ENCODE measurements at regions of chr15 and their contacts with region 1.

Region 1: GRCh38 chr15:41557673-41558399 is 1.2 kb upstream of the TYRO3 start:
- DNase-seq: peak; percentile 85
- ATAC-seq: peak; percentile 75
- H3K4me3 Mint-ChIP-seq: peak overlapping the region; percentile 69
- H3K27ac Mint-ChIP-seq: peak overlapping the region; percentile 45
- H3K4me1 Mint-ChIP-seq: peaks cover 20% of the 10 kb centered on the region
- H3K27me3 Mint-ChIP-seq: peaks cover 10% of the 10 kb centered on the region

Region 2: DNA sequence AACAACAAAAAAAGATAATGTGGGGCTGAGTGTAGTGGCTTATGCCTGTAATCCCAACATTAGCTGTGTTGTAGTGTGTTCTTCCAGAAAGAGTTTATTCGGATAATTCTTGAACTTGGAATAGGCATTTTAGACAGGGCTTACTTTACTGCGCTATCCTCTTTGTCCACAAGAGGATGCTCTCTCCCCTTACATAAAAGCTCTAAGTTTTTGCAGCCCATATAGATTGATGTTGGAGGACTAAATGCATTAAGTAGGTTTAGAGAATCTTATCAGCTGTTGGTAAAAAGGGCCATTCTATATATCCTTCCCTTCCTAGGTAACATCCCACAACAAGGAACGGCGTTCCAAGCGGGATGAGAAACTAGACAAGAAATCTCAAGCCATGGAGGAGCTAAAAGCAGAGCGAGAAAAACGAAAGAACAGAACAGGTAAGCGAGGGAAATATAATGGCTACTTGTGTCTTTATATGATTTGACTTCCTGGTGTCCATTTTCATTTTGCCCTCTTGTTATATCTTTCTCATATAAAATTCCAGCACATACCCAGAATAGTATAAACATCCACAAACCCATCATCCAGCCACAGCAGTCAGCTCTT is 91.9 kb before region 1 on chr15:
- CTCF ChIA-PET with region 1: interaction called, 8 read pairs
- POLR2A ChIA-PET with region 1: no interaction called
- intact Hi-C with region 1: loop called (anchors 5 to 10 kb)
- DNase-seq: peak; percentile 34
- ATAC-seq: peak; percentile 81
- H3K4me3 Mint-ChIP-seq: no peak overlapping the region
- H3K27ac Mint-ChIP-seq: no peak overlapping the region
- H3K4me1 Mint-ChIP-seq: no peaks in the 10 kb centered on the region
- H3K27me3 Mint-ChIP-seq: no peaks in the 10 kb centered on the region

Region 3: GRCh38 chr15:41544650-41545015 is 13.2 kb before region 1 on chr15:
- CTCF ChIA-PET with region 1: interaction called, 14 read pairs
- POLR2A ChIA-PET with region 1: interaction called, 3 read pairs
- intact Hi-C with region 1: loop called in 1 of 2 experiments (anchors 1 kb)
- DNase-seq: peak; percentile 21
- ATAC-seq: no peak
- H3K4me3 Mint-ChIP-seq: peak overlapping the region; percentile 95
- H3K27ac Mint-ChIP-seq: peak overlapping the region; percentile 91
- H3K4me1 Mint-ChIP-seq: peaks cover 12% of the 10 kb centered on the region
- H3K27me3 Mint-ChIP-seq: no peaks in the 10 kb centered on the region

Region 4: DNA sequence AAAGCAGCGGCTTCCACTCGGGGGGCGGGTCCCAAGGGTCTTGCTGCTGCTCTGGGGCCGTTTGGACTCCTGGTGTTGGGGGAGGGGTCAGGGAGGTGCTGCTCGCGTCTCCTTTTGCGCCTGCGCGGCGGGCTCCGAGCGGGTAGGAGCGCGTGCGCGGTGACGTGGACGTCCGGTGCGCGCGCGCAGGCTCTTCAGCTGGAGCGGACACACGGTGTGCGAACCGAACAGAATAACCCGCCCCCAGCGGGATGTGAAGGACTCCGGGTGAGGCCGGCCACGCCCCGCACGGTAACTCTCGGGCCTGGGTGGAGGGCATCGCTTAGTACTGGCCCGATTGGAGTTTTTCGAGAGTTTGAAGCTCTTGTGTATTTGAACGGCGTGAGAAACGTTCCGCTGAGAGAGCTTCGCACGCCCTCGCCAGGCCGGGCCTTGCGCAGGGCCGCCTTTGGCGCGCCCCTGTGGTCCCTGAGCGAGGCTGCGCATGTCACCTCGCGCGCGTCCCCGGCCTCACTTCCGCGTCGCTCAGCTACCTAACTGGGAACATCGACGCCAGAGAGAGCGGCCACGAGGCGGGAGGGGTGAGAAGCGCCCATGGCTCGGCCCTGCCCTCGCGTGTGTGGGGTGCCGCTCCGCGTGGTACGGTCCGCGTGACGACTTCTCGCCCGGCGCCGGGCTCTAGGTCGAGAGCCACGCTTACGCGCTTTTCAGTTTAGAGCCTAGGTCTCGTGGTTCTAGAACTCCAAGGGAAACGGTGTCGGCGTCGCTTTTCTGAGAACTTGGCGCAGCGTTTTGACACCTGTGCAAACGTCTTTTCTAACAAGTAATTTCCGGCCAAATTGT is 102.6 kb after region 1 on chr15 and contains the start of gene MGA:
- CTCF ChIA-PET with region 1: no interaction called
- POLR2A ChIA-PET with region 1: interaction called, 3 read pairs
- intact Hi-C with region 1: loop called in 1 of 2 experiments (anchors 2 kb)
- DNase-seq: peak; percentile 94
- ATAC-seq: peak; percentile 89
- H3K4me3 Mint-ChIP-seq: peak within 1 kb of the TSS; percentile 92
- H3K27ac Mint-ChIP-seq: peak within 1 kb of the TSS; percentile 95
- H3K4me1 Mint-ChIP-seq: peaks cover 42% of the 10 kb centered on the region
- H3K27me3 Mint-ChIP-seq: peaks cover 7% of the 10 kb centered on the region
- total RNA-seq, gene MGA: 33.7 to 39.3 TPM

Region 5: GRCh38 chr15:41811432-41812195 is 253.8 kb after region 1 on chr15:
- CTCF ChIA-PET with region 1: interaction called, 7 read pairs
- POLR2A ChIA-PET with region 1: no interaction called
- intact Hi-C with region 1: loop called (anchors 1 kb)
- DNase-seq: peak; percentile 84
- ATAC-seq: peak; percentile 98
- H3K4me3 Mint-ChIP-seq: no peak overlapping the region
- H3K27ac Mint-ChIP-seq: no peak overlapping the region
- H3K4me1 Mint-ChIP-seq: no peaks in the 10 kb centered on the region
- H3K27me3 Mint-ChIP-seq: no peaks in the 10 kb centered on the region

Region 6: GRCh38 chr15:41904541-41905005 is 346.7 kb after region 1 on chr15:
- CTCF ChIA-PET with region 1: interaction called, 4 read pairs
- POLR2A ChIA-PET with region 1: no interaction called
- intact Hi-C with region 1: loop called in 1 of 2 experiments (anchors 2 kb)
- DNase-seq: peak; percentile 81
- ATAC-seq: peak; percentile 92
- H3K4me3 Mint-ChIP-seq: no peak overlapping the region
- H3K27ac Mint-ChIP-seq: peak overlapping the region; percentile 4
- H3K4me1 Mint-ChIP-seq: peaks cover 5% of the 10 kb centered on the region
- H3K27me3 Mint-ChIP-seq: no peaks in the 10 kb centered on the region

Measured in activated CD4-positive, alpha-beta T cell treated with anti-CD3 and anti-CD28 coated beads for 36 hours (primary cell).